HCT116 (cell line): ENCODE measurements at regions of chr1 and their contacts with region 1.

Region 1: GRCh38 chr1:241950390-241950789 is 7.2 kb upstream of the BECN2 start:
- DNase-seq: no peak
- ATAC-seq: no peak
- H3K4me3 ChIP-seq: no peak overlapping the region
- H3K27ac ChIP-seq: no peak overlapping the region
- H3K4me1 ChIP-seq: peaks cover 0 to 3% of the 10 kb centered on the region in 2 experiments; a peak in 1 of 4 replicates
- H3K27me3 ChIP-seq: no peaks in the 10 kb centered on the region
- CTCF ChIP-seq: no peak
- POLR2A ChIP-seq: no peak
- RAD21 ChIP-seq: no peak

Region 2: DNA sequence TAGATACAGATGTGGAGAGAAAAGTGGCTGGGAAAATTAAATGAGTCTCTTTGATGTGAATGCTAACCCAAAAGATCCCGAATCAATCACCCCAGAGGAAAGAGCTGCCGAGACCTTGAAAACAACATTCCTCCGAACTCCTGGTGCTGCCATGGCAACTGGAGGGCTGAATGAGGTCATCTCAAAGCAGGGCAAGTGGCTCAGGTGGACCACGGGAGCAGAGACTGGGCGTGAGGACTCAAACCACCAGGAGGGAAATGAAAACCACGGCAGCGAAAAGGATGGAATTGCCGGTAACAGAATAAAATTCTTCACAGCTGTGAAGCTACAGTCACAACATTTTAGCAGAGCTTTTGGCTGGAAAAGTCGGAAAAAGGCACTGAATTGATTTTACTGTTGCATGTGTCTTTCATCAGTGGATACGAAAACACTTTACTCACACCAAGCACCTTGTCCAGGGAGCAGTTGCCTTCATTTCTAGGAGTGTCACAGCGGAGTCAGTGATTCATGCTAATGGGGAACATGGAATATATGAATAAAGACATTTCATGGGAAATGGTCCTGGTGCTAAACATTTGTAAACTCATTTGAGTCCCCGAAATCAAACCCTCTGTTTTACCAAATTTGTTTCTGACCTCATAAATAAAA is 16.1 kb before region 1 on chr1:
- CTCF ChIA-PET with region 1: no interaction called
- POLR2A ChIA-PET with region 1: no interaction called
- RAD21 ChIA-PET with region 1: no interaction called
- intact Hi-C with region 1: loop called (anchors 1 kb)
- DNase-seq: no peak
- ATAC-seq: no peak
- H3K4me3 ChIP-seq: no peak overlapping the region
- H3K27ac ChIP-seq: no peak overlapping the region
- H3K4me1 ChIP-seq: peaks cover 0 to 7% of the 10 kb centered on the region in 2 experiments; a peak in 2 of 4 replicates
- H3K27me3 ChIP-seq: no peaks in the 10 kb centered on the region
- CTCF ChIP-seq: no peak
- POLR2A ChIP-seq: no peak
- RAD21 ChIP-seq: no peak

Region 3: DNA sequence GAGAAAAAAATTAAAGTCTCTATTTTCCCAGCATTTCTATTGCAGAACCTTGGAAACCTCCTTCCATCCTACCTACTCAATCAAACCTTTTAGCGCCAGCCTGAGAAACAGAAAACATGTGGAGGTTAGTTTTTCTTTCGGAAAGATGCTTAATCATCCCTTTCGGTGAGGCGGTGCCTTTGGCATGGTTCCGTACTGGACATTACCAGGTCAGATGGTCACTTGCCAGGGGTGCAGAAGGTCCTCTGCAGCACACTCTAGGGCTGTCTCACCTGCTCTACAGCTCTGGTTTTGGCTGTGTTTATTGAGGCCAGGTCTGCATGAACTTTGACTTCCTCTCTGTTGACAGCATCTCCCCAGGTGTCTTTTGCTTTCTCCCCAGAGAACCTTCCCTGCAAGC is 452.6 kb after region 1 on chr1:
- CTCF ChIA-PET with region 1: no interaction called
- POLR2A ChIA-PET with region 1: no interaction called
- RAD21 ChIA-PET with region 1: no interaction called
- intact Hi-C with region 1: no loop called
- DNase-seq: no peak
- ATAC-seq: no peak
- H3K4me3 ChIP-seq: no peak overlapping the region
- H3K27ac ChIP-seq: no peak overlapping the region
- H3K4me1 ChIP-seq: no peaks in the 10 kb centered on the region
- H3K27me3 ChIP-seq: no peaks in the 10 kb centered on the region
- CTCF ChIP-seq: no peak
- POLR2A ChIP-seq: no peak
- RAD21 ChIP-seq: no peak